Activated naive CD4-positive, alpha-beta T cell treated with anti-CD3 and anti-CD28 coated beads, Interleukin-2, amount 10 ng/mL, durations not matched to agents 7 days and 5 days (primary cell): ENCODE measurements at regions of chr17 and their contacts with region 1.

Region 1: GRCh38 chr17:16363749-16364536 is 10.7 kb upstream of the CENPV start:
- DNase-seq: peak; percentile 85
- H3K4me3 Mint-ChIP-seq: no peak overlapping the region
- H3K27ac Mint-ChIP-seq: no peak overlapping the region
- H3K4me1 Mint-ChIP-seq: no peaks in the 10 kb centered on the region
- H3K27me3 Mint-ChIP-seq: peaks cover 12% of the 10 kb centered on the region

Region 2: GRCh38 chr17:16353317-16354174 is 10.4 kb before region 1 on chr17 and contains the start of gene CENPV:
- CTCF ChIA-PET with region 1: interaction called, 28 read pairs
- DNase-seq: peak; percentile 69
- H3K4me3 Mint-ChIP-seq: peak within 1 kb of the TSS; percentile 91
- H3K27ac Mint-ChIP-seq: peak within 1 kb of the TSS; percentile 78
- H3K4me1 Mint-ChIP-seq: peaks cover 24% of the 10 kb centered on the region
- H3K27me3 Mint-ChIP-seq: peaks cover 18% of the 10 kb centered on the region

Region 3: GRCh38 chr17:16380640-16381495 is 16.9 kb after region 1 on chr17 and contains the start of gene UBB:
- CTCF ChIA-PET with region 1: interaction called, 30 read pairs
- DNase-seq: peak; percentile 97
- H3K4me3 Mint-ChIP-seq: peak within 1 kb of the TSS; percentile 89
- H3K27ac Mint-ChIP-seq: peak within 1 kb of the TSS; percentile 93
- H3K4me1 Mint-ChIP-seq: peaks cover 40% of the 10 kb centered on the region
- H3K27me3 Mint-ChIP-seq: peaks cover 13% of the 10 kb centered on the region

Region 4: GRCh38 chr17:16415031-16415924 is 51.3 kb after region 1 on chr17 and contains the start of gene TRPV2:
- CTCF ChIA-PET with region 1: interaction called, 44 read pairs
- DNase-seq: peak; percentile 73
- H3K4me3 Mint-ChIP-seq: peak within 1 kb of the TSS; percentile 94
- H3K27ac Mint-ChIP-seq: peak within 1 kb of the TSS; percentile 97
- H3K4me1 Mint-ChIP-seq: peaks cover 47% of the 10 kb centered on the region
- H3K27me3 Mint-ChIP-seq: no peaks in the 10 kb centered on the region

Region 5: GRCh38 chr17:16449121-16449570 is 85.2 kb after region 1 on chr17:
- CTCF ChIA-PET with region 1: interaction called, 13 read pairs
- DNase-seq: no peak
- H3K4me3 Mint-ChIP-seq: no peak overlapping the region
- H3K27ac Mint-ChIP-seq: no peak overlapping the region
- H3K4me1 Mint-ChIP-seq: peaks cover 14% of the 10 kb centered on the region
- H3K27me3 Mint-ChIP-seq: no peaks in the 10 kb centered on the region

Region 6: DNA sequence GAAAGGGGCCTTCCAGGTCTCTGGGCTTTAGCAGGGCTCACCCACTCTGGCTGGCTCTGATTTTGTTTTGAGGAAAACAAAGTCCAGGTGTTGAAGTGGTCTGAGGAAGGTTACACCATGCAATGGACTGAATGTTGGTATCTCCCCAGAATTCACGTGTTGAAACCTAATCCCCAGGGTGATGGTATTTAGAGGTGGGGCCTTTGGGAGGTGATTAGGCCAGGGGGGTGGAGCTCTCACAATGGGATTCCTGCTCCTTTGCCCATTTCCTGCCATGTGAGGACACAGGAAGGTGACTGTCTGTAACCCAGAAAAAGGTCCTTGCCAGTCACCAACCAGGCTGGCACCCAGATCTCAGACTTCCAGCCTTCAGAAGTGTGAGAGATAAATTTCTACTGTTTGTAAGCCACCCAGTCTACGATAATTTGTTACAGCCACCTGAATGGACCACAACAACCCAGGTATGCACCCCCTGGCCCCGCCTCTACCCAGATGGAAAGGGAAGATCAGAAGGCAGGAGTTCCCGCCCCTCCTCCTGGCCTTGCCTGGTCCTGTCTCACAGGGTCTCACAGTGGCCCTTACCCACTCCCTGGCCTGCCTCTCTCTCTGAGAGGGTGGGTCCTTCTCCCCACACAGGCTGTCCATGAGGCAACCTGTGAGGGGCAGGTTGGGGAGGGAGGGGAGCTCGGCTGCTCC is 96.1 kb after region 1 on chr17:
- CTCF ChIA-PET with region 1: no interaction called
- DNase-seq: no peak
- H3K4me3 Mint-ChIP-seq: no peak overlapping the region
- H3K27ac Mint-ChIP-seq: no peak overlapping the region
- H3K4me1 Mint-ChIP-seq: no peaks in the 10 kb centered on the region
- H3K27me3 Mint-ChIP-seq: no peaks in the 10 kb centered on the region

Region 7: DNA sequence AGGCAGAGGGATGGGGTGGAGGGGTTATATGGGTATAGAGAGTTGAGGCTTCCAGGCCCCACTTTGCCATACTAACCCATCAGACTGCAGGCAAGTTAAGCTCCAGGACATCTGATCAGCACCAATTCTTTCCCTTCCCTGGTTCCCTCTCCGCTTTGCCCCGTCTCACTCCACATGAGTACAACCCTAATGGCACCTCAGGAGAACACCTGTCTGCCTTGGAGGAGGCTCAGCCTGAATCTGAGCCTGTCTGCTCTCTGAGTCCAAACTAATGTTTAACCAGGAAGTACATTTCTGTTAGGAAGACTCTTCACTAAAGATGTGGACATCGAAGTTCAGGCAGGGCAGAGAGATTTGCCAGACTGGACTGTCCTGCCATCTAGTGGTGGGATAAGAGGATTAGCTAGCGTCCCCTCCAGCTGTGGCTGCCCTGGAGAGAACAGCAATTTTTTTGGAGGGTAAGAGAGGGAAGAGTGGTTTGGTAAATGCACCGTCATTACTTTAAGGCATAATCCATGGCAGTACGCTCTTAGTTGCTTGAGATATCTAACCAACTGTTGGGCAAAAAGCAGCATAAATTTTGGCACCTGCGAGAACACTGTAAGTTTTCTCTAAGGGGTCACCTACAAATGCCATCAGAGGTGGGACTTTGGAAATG is 157.3 kb after region 1 on chr17:
- CTCF ChIA-PET with region 1: interaction called, 58 read pairs
- DNase-seq: peak; percentile 77
- H3K4me3 Mint-ChIP-seq: no peak overlapping the region
- H3K27ac Mint-ChIP-seq: no peak overlapping the region
- H3K4me1 Mint-ChIP-seq: peaks cover 5% of the 10 kb centered on the region
- H3K27me3 Mint-ChIP-seq: peaks cover 32% of the 10 kb centered on the region